ENCODE measurements at regions of chr1 and their contacts with region 1.

Region 1: DNA sequence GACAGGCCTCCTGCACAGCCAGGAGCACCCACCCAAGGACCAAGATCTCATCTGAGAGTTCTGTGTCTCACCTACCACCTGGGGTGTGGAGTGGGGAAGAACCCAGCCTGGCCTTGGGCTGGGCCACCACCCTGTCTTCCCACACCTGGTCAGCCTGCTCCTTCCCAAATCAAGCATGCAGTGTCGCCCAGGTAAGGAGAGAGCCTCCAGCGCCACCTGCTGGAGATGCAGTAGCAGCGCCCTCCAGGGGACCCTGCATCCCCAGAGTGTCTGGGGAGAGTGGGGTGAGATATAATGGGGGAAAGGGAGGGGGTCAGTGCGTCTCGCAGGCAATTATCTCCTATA is 32.3 kb downstream of the KIAA2013 start:
- DNase-seq: peak; percentile 77 to 82
- H3K4me3 ChIP-seq: no peak overlapping the region
- H3K4me3 Mint-ChIP-seq: no peak overlapping the region
- H3K27ac Mint-ChIP-seq: no peak overlapping the region
- H3K4me1 ChIP-seq: peaks cover 10% of the 10 kb centered on the region; the same call in 1 of the 2 replicates
- H3K4me1 Mint-ChIP-seq: peaks cover 9% of the 10 kb centered on the region
- H3K27me3 ChIP-seq: no peaks in the 10 kb centered on the region
- H3K27me3 Mint-ChIP-seq: peaks cover 5% of the 10 kb centered on the region
- CTCF ChIP-seq: peak; percentile 83 to 97

Region 2: DNA sequence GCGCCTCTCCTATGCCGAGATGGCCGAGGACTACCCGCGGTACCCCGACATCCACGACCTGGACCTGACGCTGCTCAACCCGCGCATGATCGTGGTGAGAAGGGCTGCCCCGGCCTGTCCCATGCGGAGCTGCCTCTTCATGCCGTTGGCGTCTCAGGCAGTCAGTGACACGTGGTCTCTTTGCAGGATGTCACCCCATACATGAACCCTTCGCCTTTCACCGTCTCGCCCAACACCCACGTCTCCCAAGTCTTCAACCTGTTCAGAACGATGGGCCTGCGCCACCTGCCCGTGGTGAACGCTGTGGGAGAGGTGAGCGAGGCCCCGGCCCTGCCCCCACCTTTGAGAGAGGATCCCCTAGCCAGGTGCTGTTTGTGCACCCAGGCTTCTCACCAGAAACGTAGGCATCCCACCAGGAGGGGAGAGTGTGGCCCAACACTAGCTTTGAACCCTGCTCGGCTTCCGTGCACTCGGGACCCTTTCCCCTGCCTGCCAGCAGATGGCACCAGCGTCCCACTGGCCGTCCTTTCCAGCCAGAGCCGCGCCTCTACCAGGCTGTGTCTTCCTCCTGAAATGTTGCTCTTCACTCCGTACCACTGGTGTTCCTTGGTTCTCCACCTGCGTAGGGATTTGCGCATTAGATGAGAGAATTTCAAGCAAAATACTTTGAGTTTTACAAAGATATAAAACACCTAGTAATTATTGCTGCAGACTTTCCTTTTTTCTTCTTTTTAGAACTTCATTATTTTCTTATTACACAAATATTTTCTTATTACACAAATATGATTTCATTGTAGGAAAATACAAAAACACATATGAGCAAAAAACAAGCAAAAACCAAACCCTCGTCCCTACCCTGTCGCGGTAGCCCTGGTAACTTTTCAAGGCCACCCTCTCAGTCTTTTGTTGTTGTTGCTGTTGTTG is 55.3 kb before region 1 on chr1:
- CTCF ChIA-PET with region 1: interaction called, 10 read pairs
- POLR2A ChIA-PET with region 1: no interaction called
- intact Hi-C with region 1: loop called (anchors 1 kb)
- DNase-seq: peak; percentile 68 to 81
- H3K4me3 ChIP-seq: no peak overlapping the region
- H3K4me3 Mint-ChIP-seq: no peak overlapping the region
- H3K27ac Mint-ChIP-seq: no peak overlapping the region
- H3K4me1 ChIP-seq: no peaks in the 10 kb centered on the region
- H3K4me1 Mint-ChIP-seq: no peaks in the 10 kb centered on the region
- H3K27me3 ChIP-seq: no peaks in the 10 kb centered on the region
- H3K27me3 Mint-ChIP-seq: no peaks in the 10 kb centered on the region
- CTCF ChIP-seq: peak; percentile 92 to 98

Region 3: GRCh38 chr1:11858968-11859871 is 34.7 kb before region 1 on chr1:
- CTCF ChIA-PET with region 1: no interaction called
- POLR2A ChIA-PET with region 1: no interaction called
- intact Hi-C with region 1: loop called (anchors 2 kb)
- DNase-seq: peak; percentile 85 to 92
- H3K4me3 ChIP-seq: peak overlapping the region; percentile 26
- H3K4me3 Mint-ChIP-seq: peak overlapping the region; percentile 74
- H3K27ac Mint-ChIP-seq: peak overlapping the region; percentile 89
- H3K4me1 ChIP-seq: peaks cover 18% of the 10 kb centered on the region
- H3K4me1 Mint-ChIP-seq: peaks cover 8% of the 10 kb centered on the region
- H3K27me3 ChIP-seq: no peaks in the 10 kb centered on the region
- H3K27me3 Mint-ChIP-seq: no peaks in the 10 kb centered on the region
- CTCF ChIP-seq: peak in 1 of 2 experiments; percentile 54

Region 4: GRCh38 chr1:12019858-12020509 is 126.1 kb after region 1 on chr1:
- CTCF ChIA-PET with region 1: no interaction called
- POLR2A ChIA-PET with region 1: no interaction called
- intact Hi-C with region 1: no loop called
- DNase-seq: no peak
- H3K4me3 ChIP-seq: peak overlapping the region; percentile 81
- H3K4me3 Mint-ChIP-seq: peak overlapping the region; percentile 74
- H3K27ac Mint-ChIP-seq: peak overlapping the region; percentile 50
- H3K4me1 ChIP-seq: no peaks in the 10 kb centered on the region
- H3K4me1 Mint-ChIP-seq: no peaks in the 10 kb centered on the region
- H3K27me3 ChIP-seq: no peaks in the 10 kb centered on the region
- H3K27me3 Mint-ChIP-seq: no peaks in the 10 kb centered on the region
- CTCF ChIP-seq: no peak

Region 5: GRCh38 chr1:12031039-12031980 is 137.4 kb after region 1 on chr1:
- CTCF ChIA-PET with region 1: no interaction called
- POLR2A ChIA-PET with region 1: no interaction called
- intact Hi-C with region 1: no loop called
- DNase-seq: peak; percentile 47 to 60
- H3K4me3 ChIP-seq: no peak overlapping the region
- H3K4me3 Mint-ChIP-seq: no peak overlapping the region
- H3K27ac Mint-ChIP-seq: no peak overlapping the region
- H3K4me1 ChIP-seq: no peaks in the 10 kb centered on the region
- H3K4me1 Mint-ChIP-seq: no peaks in the 10 kb centered on the region
- H3K27me3 ChIP-seq: no peaks in the 10 kb centered on the region
- H3K27me3 Mint-ChIP-seq: no peaks in the 10 kb centered on the region
- CTCF ChIP-seq: peak; percentile 37 to 72